ENCODE measurements at regions of chr14 and their contacts with region 1.

Region 1: GRCh38 chr14:59126710-59127432 is 61.6 kb upstream of the DAAM1 start:
- DNase-seq: peak in 1 of 2 experiments; percentile 46
- H3K4me3 ChIP-seq: no peak overlapping the region
- H3K4me3 Mint-ChIP-seq: no peak overlapping the region
- H3K27ac Mint-ChIP-seq: no peak overlapping the region
- H3K4me1 ChIP-seq: no peaks in the 10 kb centered on the region
- H3K4me1 Mint-ChIP-seq: no peaks in the 10 kb centered on the region
- H3K27me3 ChIP-seq: no peaks in the 10 kb centered on the region
- H3K27me3 Mint-ChIP-seq: peaks cover 5% of the 10 kb centered on the region
- CTCF ChIP-seq: peak; percentile 62 to 77

Region 2: GRCh38 chr14:58501214-58501816 is 625.6 kb before region 1 on chr14:
- CTCF ChIA-PET with region 1: interaction called, 3 read pairs
- POLR2A ChIA-PET with region 1: no interaction called
- intact Hi-C with region 1: loop called (anchors 2 kb)
- DNase-seq: peak in 1 of 2 experiments; percentile 41
- H3K4me3 ChIP-seq: no peak overlapping the region
- H3K4me3 Mint-ChIP-seq: no peak overlapping the region
- H3K27ac Mint-ChIP-seq: no peak overlapping the region
- H3K4me1 ChIP-seq: no peaks in the 10 kb centered on the region
- H3K4me1 Mint-ChIP-seq: no peaks in the 10 kb centered on the region
- H3K27me3 ChIP-seq: no peaks in the 10 kb centered on the region
- H3K27me3 Mint-ChIP-seq: no peaks in the 10 kb centered on the region
- CTCF ChIP-seq: peak; percentile 80 to 82

Region 3: DNA sequence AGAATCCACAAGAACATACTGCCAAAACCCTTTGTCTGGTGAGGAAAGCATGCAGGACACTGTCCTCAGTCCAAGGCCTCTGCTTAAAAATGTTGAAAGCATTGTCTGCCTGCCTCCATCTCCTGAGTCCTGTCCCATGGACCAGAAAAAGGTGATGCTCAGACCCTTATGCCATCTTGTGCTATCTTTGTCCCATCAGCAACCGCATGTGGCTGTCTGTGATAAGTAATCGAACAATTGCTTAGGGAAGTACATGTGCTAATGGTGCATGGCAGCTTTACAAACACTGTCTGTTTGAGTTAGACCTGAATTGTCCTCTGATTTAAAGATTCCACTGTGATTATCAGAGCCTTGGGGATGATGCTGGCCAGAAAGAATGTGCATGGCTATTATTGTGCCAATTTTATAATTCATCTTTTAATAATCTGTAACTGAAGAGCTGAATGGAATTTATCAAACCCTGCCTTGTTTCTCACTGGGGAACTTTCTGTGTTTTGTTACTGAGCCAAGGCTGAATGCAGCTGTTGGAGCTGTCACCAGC is 311.6 kb before region 1 on chr14:
- CTCF ChIA-PET with region 1: no interaction called
- POLR2A ChIA-PET with region 1: no interaction called
- intact Hi-C with region 1: no loop called
- DNase-seq: no peak
- H3K4me3 ChIP-seq: no peak overlapping the region
- H3K4me3 Mint-ChIP-seq: no peak overlapping the region
- H3K27ac Mint-ChIP-seq: no peak overlapping the region
- H3K4me1 ChIP-seq: no peaks in the 10 kb centered on the region
- H3K4me1 Mint-ChIP-seq: no peaks in the 10 kb centered on the region
- H3K27me3 ChIP-seq: no peaks in the 10 kb centered on the region
- H3K27me3 Mint-ChIP-seq: no peaks in the 10 kb centered on the region
- CTCF ChIP-seq: no peak

Region 4: DNA sequence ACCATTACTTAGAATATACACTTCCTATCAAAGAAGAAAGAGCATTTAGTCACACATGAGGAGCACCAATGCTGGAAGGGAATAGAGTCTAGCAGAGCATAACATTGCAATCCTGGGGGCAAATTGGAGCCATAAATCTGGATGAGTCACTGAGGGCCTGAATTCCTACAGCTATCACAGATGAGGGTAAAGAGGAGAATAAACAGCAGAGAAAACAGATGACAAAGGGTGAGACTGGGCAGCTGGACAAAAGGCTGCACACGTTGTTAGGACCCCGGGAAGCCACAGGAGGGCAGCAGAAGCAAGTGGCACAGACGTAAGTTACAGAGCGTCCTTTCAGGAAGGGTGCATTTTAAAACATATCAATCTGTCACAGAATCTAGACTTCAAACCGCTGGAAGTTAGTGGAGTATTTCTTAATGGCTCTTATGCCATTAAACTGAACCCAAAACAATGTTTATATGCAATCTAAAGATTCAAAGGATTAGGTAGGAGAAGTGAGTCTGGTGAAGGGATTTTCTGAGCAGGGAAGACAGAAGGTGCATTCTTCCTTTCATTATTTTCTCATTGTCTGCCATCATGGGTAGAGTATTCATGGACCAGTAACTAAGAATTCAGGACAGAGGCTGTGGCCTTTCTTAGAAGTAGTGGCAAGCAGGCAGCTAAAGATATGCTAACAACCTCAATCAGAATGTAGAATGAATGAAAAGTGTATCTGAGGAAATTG is 98.2 kb before region 1 on chr14:
- CTCF ChIA-PET with region 1: interaction called, 6 read pairs
- POLR2A ChIA-PET with region 1: no interaction called
- intact Hi-C with region 1: loop called (anchors 1 kb)
- DNase-seq: peak; percentile 67 to 71
- H3K4me3 ChIP-seq: no peak overlapping the region
- H3K4me3 Mint-ChIP-seq: no peak overlapping the region
- H3K27ac Mint-ChIP-seq: no peak overlapping the region
- H3K4me1 ChIP-seq: no peaks in the 10 kb centered on the region
- H3K4me1 Mint-ChIP-seq: peaks cover 9% of the 10 kb centered on the region
- H3K27me3 ChIP-seq: no peaks in the 10 kb centered on the region
- H3K27me3 Mint-ChIP-seq: peaks cover 7% of the 10 kb centered on the region
- CTCF ChIP-seq: peak; percentile 72 to 92

Region 5: GRCh38 chr14:59107819-59108428 is 18.9 kb before region 1 on chr14:
- CTCF ChIA-PET with region 1: no interaction called
- POLR2A ChIA-PET with region 1: no interaction called
- intact Hi-C with region 1: no loop called
- DNase-seq: no peak
- H3K4me3 ChIP-seq: no peak overlapping the region
- H3K4me3 Mint-ChIP-seq: no peak overlapping the region
- H3K27ac Mint-ChIP-seq: no peak overlapping the region
- H3K4me1 ChIP-seq: no peaks in the 10 kb centered on the region
- H3K4me1 Mint-ChIP-seq: no peaks in the 10 kb centered on the region
- H3K27me3 ChIP-seq: no peaks in the 10 kb centered on the region
- H3K27me3 Mint-ChIP-seq: no peaks in the 10 kb centered on the region
- CTCF ChIP-seq: no peak

Region 6: GRCh38 chr14:59177254-59177653 is 50.4 kb after region 1 on chr14:
- CTCF ChIA-PET with region 1: no interaction called
- POLR2A ChIA-PET with region 1: no interaction called
- intact Hi-C with region 1: no loop called
- DNase-seq: peak in 1 of 2 experiments; percentile 9
- H3K4me3 ChIP-seq: no peak overlapping the region
- H3K4me3 Mint-ChIP-seq: no peak overlapping the region
- H3K27ac Mint-ChIP-seq: no peak overlapping the region
- H3K4me1 ChIP-seq: no peaks in the 10 kb centered on the region
- H3K4me1 Mint-ChIP-seq: no peaks in the 10 kb centered on the region
- H3K27me3 ChIP-seq: no peaks in the 10 kb centered on the region; the same call in 1 of the 2 replicates
- H3K27me3 Mint-ChIP-seq: no peaks in the 10 kb centered on the region
- CTCF ChIP-seq: no peak

Region 7: GRCh38 chr14:59189786-59190771 is 63.2 kb after region 1 on chr14:
- CTCF ChIA-PET with region 1: no interaction called
- POLR2A ChIA-PET with region 1: no interaction called
- intact Hi-C with region 1: loop called (anchors 2 kb)
- DNase-seq: peak; percentile 78 to 84
- H3K4me3 ChIP-seq: peak overlapping the region; percentile 89
- H3K4me3 Mint-ChIP-seq: peak overlapping the region; percentile 96
- H3K27ac Mint-ChIP-seq: peak overlapping the region; percentile 31
- H3K4me1 ChIP-seq: 0 out of 2 replicates have a peak, but pooled peaks cover 5% of the 10 kb centered on the region
- H3K4me1 Mint-ChIP-seq: peaks cover 11% of the 10 kb centered on the region
- H3K27me3 ChIP-seq: no peaks in the 10 kb centered on the region
- H3K27me3 Mint-ChIP-seq: no peaks in the 10 kb centered on the region
- CTCF ChIP-seq: no peak

Region 8: DNA sequence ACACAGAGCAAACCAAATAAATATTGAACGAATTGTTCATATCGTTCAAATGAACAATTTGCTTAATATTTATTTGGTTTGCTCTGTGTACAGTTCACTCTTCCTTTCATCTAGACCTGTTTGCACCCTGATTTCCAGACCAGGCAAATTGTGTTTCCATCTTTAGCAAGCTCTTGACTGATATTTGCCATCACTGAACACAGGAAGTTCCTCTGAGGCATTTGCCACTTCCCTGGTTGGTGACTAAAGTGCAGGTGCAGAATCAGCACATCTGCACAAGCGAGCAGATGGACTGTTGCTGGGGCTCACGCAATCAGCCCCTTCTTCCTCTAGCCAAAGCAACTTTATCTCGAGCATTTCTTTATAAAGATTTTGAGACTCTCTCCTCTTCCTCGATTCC is 174.5 kb after region 1 on chr14:
- CTCF ChIA-PET with region 1: no interaction called
- POLR2A ChIA-PET with region 1: no interaction called
- intact Hi-C with region 1: no loop called
- DNase-seq: no peak
- H3K4me3 ChIP-seq: no peak overlapping the region
- H3K4me3 Mint-ChIP-seq: no peak overlapping the region
- H3K27ac Mint-ChIP-seq: no peak overlapping the region
- H3K4me1 ChIP-seq: peaks cover 44% of the 10 kb centered on the region
- H3K4me1 Mint-ChIP-seq: peaks cover 40% of the 10 kb centered on the region
- H3K27me3 ChIP-seq: no peaks in the 10 kb centered on the region
- H3K27me3 Mint-ChIP-seq: no peaks in the 10 kb centered on the region
- CTCF ChIP-seq: no peak

Region 9: DNA sequence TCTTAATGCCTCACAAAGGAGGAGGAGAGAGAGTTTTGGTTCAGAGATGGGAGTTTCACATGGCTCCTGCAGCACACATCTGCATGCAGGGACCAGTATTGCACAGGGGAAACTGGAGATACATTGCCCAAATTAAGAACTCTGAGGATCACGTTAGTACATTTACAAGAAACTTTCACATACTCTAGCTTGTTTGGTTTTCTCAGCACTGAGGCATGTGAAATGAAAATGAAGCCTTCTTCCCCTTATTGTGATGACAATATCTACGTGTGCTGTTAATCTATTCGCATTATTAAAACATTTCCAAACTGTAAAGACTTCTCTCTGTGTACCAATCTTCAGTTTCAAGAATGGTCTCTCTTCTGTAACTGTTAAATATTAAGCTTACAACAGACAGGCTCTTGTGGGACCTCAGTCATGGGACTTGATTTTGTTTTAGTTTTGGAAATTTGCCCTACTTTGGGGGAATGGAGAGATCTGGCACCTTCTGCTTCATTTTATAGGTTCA is 186.3 kb after region 1 on chr14:
- CTCF ChIA-PET with region 1: no interaction called
- POLR2A ChIA-PET with region 1: interaction called, 4 read pairs
- intact Hi-C with region 1: loop called (anchors 5 kb)
- DNase-seq: no peak
- H3K4me3 ChIP-seq: no peak overlapping the region
- H3K4me3 Mint-ChIP-seq: no peak overlapping the region
- H3K27ac Mint-ChIP-seq: no peak overlapping the region
- H3K4me1 ChIP-seq: peaks cover 16% of the 10 kb centered on the region
- H3K4me1 Mint-ChIP-seq: peaks cover 10% of the 10 kb centered on the region
- H3K27me3 ChIP-seq: no peaks in the 10 kb centered on the region
- H3K27me3 Mint-ChIP-seq: no peaks in the 10 kb centered on the region
- CTCF ChIP-seq: no peak

Region 10: GRCh38 chr14:59422069-59422881 is 295.4 kb after region 1 on chr14:
- CTCF ChIA-PET with region 1: no interaction called
- POLR2A ChIA-PET with region 1: no interaction called
- intact Hi-C with region 1: loop called (anchors 1 kb)
- DNase-seq: no peak
- H3K4me3 ChIP-seq: no peak overlapping the region
- H3K4me3 Mint-ChIP-seq: no peak overlapping the region
- H3K27ac Mint-ChIP-seq: no peak overlapping the region
- H3K4me1 ChIP-seq: no peaks in the 10 kb centered on the region
- H3K4me1 Mint-ChIP-seq: no peaks in the 10 kb centered on the region
- H3K27me3 ChIP-seq: no peaks in the 10 kb centered on the region
- H3K27me3 Mint-ChIP-seq: peaks cover 35% of the 10 kb centered on the region
- CTCF ChIP-seq: no peak

Region 11: DNA sequence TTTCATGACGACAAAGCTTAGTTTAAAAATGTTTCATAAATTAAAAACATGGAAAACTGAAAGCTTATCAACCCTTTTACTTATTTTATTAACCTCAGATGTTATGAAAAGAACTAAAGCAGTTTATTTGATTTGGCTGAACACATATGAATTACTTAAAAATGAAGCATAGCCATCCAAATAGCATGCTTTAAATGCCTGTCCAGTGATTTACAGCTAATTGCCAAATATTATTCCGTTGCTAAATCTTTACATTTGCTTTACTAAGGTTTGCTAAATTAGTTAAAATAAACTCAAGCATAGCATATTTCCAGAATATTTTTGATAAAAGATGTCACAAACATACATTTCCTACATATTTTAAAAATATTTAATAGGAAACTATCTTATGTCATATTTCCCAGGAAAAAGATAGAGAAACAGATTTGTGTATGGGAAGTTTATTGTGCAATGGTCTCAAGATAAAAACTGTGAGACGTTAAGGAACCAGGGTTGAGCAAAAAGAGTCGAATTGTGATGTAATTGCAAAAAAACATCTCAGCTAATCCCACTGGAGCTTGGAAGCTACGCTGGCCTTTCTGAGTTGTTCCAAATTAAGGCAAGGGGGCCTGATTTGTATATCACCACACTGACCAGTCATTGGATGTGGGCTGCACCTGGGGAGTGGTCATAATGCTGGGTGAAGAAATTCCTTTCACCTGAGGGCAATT is 312.5 kb after region 1 on chr14:
- CTCF ChIA-PET with region 1: interaction called, 4 read pairs
- POLR2A ChIA-PET with region 1: no interaction called
- intact Hi-C with region 1: loop called (anchors 1 kb)
- DNase-seq: no peak
- H3K4me3 ChIP-seq: no peak overlapping the region
- H3K4me3 Mint-ChIP-seq: no peak overlapping the region
- H3K27ac Mint-ChIP-seq: no peak overlapping the region
- H3K4me1 ChIP-seq: no peaks in the 10 kb centered on the region
- H3K4me1 Mint-ChIP-seq: no peaks in the 10 kb centered on the region
- H3K27me3 ChIP-seq: no peaks in the 10 kb centered on the region
- H3K27me3 Mint-ChIP-seq: peaks cover 6% of the 10 kb centered on the region
- CTCF ChIP-seq: no peak

Measured in Caco-2 (cell line).